HepG2 (cell line): ENCODE measurements at regions of chr20 and their contacts with region 1.

Region 1: GRCh38 chr20:1415667-1416468 is 23.0 kb upstream of the FKBP1A start:
- DNase-seq: peak; percentile 91
- ATAC-seq: peak; percentile 93
- H3K4me3 ChIP-seq: no peak overlapping the region
- H3K27ac ChIP-seq: no peak overlapping the region
- H3K4me1 ChIP-seq: peaks cover 19% of the 10 kb centered on the region
- H3K27me3 ChIP-seq: no peaks in the 10 kb centered on the region
- CTCF ChIP-seq: peak; percentile 11; the same call in 1 of the 2 replicates
- EP300 ChIP-seq: peak; percentile 73 to 90; a peak in 3 of 4 replicates
- POLR2A ChIP-seq: no peak
- RAD21 ChIP-seq: no peak

Region 2: DNA sequence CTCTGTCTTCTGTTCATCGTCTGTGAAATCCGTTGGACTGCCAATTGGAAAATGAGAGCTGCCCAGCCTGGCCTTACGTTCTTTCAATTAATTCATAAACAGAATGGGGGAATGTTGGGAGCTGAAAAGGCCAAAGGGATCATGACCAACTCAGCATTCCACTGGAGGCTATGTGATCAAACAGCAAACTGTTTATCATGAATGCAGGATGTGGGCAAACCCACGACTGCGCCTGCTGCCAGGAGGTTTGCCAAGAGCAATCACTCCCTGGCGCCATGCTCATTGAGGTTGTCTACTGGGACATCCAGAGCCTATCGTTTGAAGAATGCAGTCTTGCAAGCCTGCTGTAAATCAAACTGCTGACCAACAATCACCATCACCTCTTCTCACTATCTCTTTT is 13.7 kb before region 1 on chr20:
- CTCF ChIA-PET with region 1: no interaction called
- POLR2A ChIA-PET with region 1: no interaction called
- in situ Hi-C with region 1: no loop called
- intact Hi-C with region 1: loop called (anchors 2 kb)
- DNase-seq: no peak
- ATAC-seq: no peak
- H3K4me3 ChIP-seq: no peak overlapping the region
- H3K27ac ChIP-seq: no peak overlapping the region
- H3K4me1 ChIP-seq: peaks cover 46% of the 10 kb centered on the region
- H3K27me3 ChIP-seq: 0 out of 5 replicates have a peak, but pooled peaks cover 0 to 11% of the 10 kb centered on the region in 2 experiments
- CTCF ChIP-seq: no peak
- EP300 ChIP-seq: no peak
- POLR2A ChIP-seq: no peak
- RAD21 ChIP-seq: no peak